Panc1 (cell line): ENCODE measurements at regions of chr18 and their contacts with region 1.

Region 1: GRCh38 chr18:63016270-63016669 is 300.9 kb downstream of the PHLPP1 start:
- DNase-seq: peak; percentile 27
- ATAC-seq: 0 out of 2 replicates have a peak, but pooled peaks have one; percentile 74
- H3K4me3 ChIP-seq: no peak overlapping the region
- H3K27ac ChIP-seq: no peak overlapping the region
- H3K4me1 ChIP-seq: no peaks in the 10 kb centered on the region
- H3K27me3 ChIP-seq: no peaks in the 10 kb centered on the region
- CTCF ChIP-seq: peak; percentile 69

Region 2: DNA sequence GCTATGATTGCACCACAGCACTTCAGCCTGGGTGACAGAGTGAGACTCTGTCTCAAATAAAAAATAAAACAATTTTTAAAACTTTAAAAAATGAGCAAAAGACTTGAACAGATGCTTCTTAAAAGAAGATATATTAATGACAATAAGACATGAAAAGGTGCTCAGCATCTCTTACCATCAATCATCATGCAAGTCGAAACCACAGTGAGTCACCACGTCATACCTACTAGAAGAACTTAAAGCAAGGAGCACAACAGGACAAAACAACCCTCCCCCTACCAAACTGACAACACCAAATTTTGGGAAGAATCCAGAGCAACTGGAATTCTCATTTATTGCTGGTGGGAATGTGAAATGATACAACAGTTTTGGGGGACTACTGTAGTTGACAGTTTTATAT is 51.7 kb after region 1 on chr18:
- CTCF ChIA-PET with region 1: no interaction called
- POLR2A ChIA-PET with region 1: no interaction called
- in situ Hi-C with region 1: no loop called
- intact Hi-C with region 1: loop called (anchors 2 kb)
- DNase-seq: no peak
- ATAC-seq: no peak
- H3K4me3 ChIP-seq: no peak overlapping the region
- H3K27ac ChIP-seq: no peak overlapping the region
- H3K4me1 ChIP-seq: peaks cover 8% of the 10 kb centered on the region
- H3K27me3 ChIP-seq: no peaks in the 10 kb centered on the region
- CTCF ChIP-seq: no peak

Region 3: GRCh38 chr18:63162271-63163014 is 146.2 kb after region 1 on chr18:
- CTCF ChIA-PET with region 1: no interaction called
- POLR2A ChIA-PET with region 1: no interaction called
- in situ Hi-C with region 1: no loop called
- intact Hi-C with region 1: no loop called
- DNase-seq: no peak
- ATAC-seq: no peak
- H3K4me3 ChIP-seq: no peak overlapping the region
- H3K27ac ChIP-seq: no peak overlapping the region
- H3K4me1 ChIP-seq: no peaks in the 10 kb centered on the region
- H3K27me3 ChIP-seq: no peaks in the 10 kb centered on the region
- CTCF ChIP-seq: no peak

Region 4: GRCh38 chr18:63322841-63323634 is 306.8 kb after region 1 on chr18:
- CTCF ChIA-PET with region 1: interaction called, 15 read pairs
- POLR2A ChIA-PET with region 1: no interaction called
- in situ Hi-C with region 1: no loop called
- intact Hi-C with region 1: loop called (anchors 1 kb)
- DNase-seq: peak; percentile 32
- ATAC-seq: no peak
- H3K4me3 ChIP-seq: no peak overlapping the region
- H3K27ac ChIP-seq: no peak overlapping the region
- H3K4me1 ChIP-seq: peaks cover 6% of the 10 kb centered on the region; the same call in 1 of the 2 replicates
- H3K27me3 ChIP-seq: peaks cover 9% of the 10 kb centered on the region
- CTCF ChIP-seq: peak; percentile 68

Region 5: GRCh38 chr18:63339920-63340484 is 323.7 kb after region 1 on chr18:
- CTCF ChIA-PET with region 1: interaction called, 10 read pairs
- POLR2A ChIA-PET with region 1: no interaction called
- in situ Hi-C with region 1: no loop called
- intact Hi-C with region 1: no loop called
- DNase-seq: no peak
- ATAC-seq: no peak
- H3K4me3 ChIP-seq: no peak overlapping the region
- H3K27ac ChIP-seq: no peak overlapping the region
- H3K4me1 ChIP-seq: no peaks in the 10 kb centered on the region
- H3K27me3 ChIP-seq: no peaks in the 10 kb centered on the region
- CTCF ChIP-seq: peak; percentile 51; the same call in 1 of the 2 replicates

Region 6: GRCh38 chr18:63439334-63439733 is 423.1 kb after region 1 on chr18:
- CTCF ChIA-PET with region 1: interaction called, 4 read pairs
- POLR2A ChIA-PET with region 1: no interaction called
- in situ Hi-C with region 1: no loop called
- intact Hi-C with region 1: loop called (anchors 10 kb)
- DNase-seq: peak; percentile 61
- ATAC-seq: peak; percentile 78; the same call in 1 of the 2 replicates
- H3K4me3 ChIP-seq: no peak overlapping the region
- H3K27ac ChIP-seq: no peak overlapping the region
- H3K4me1 ChIP-seq: no peaks in the 10 kb centered on the region
- H3K27me3 ChIP-seq: no peaks in the 10 kb centered on the region
- CTCF ChIP-seq: peak; percentile 67